ENCODE measurements at regions of chr13 and their contacts with region 1.

Region 1: DNA sequence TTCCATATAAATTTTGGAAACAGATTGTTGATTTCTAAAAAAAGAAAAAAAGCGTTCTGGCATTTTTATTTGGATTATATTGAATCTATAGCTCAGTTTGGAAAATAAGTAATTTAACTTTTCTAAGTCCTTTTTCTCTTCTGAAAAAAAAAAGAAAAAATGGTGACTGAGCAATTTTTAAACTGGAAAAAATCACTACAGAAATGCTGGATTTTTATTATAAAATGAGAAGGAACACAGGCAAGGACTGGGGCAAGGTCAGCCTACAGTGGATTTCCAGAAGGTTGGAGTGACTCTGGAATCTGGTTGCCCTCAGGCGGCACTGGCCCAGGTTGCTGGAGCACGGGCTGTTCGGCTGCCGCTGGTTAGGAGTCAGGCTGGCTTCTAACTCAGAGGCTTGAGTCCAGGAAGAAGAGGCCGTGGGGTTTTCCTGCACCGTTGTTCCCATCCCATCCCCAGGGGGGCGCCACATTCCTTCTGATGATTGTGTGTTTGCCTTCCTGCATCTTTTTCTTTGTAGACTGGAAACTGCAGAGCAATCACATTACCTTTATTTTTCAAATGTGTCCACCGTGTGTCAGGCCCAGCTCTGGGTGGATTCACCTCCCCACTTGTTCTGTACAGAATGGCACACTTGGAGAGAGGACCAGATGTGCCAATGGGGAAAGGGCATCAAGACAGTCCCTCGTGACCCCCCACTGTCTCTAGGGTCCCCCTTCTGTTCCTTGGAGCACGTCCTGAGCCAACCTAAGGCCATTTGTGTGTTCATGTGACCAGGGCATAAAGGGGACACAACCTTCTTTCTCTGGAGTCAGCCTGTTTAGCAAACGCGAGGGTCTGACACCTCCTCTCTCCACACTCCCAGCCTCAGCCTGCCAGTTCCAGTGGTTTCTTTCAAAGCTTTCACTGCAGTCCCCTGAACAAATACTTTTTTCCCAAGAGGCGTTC is 44.5 kb upstream of the GTF3A start:
- DNase-seq: peak; percentile 85 to 90
- H3K4me3 ChIP-seq: no peak overlapping the region
- H3K4me3 Mint-ChIP-seq: no peak overlapping the region
- H3K27ac Mint-ChIP-seq: no peak overlapping the region
- H3K4me1 ChIP-seq: peaks cover 4% of the 10 kb centered on the region; the same call in 1 of the 2 replicates
- H3K4me1 Mint-ChIP-seq: peaks cover 11% of the 10 kb centered on the region
- H3K27me3 ChIP-seq: no peaks in the 10 kb centered on the region
- H3K27me3 Mint-ChIP-seq: no peaks in the 10 kb centered on the region
- CTCF ChIP-seq: peak; percentile 88 to 90

Region 2: GRCh38 chr13:27406178-27406939 is 26.4 kb after region 1 on chr13:
- CTCF ChIA-PET with region 1: no interaction called
- POLR2A ChIA-PET with region 1: no interaction called
- intact Hi-C with region 1: loop called (anchors 1 kb)
- DNase-seq: peak in 1 of 2 experiments; percentile 57
- H3K4me3 ChIP-seq: no peak overlapping the region
- H3K4me3 Mint-ChIP-seq: no peak overlapping the region
- H3K27ac Mint-ChIP-seq: no peak overlapping the region
- H3K4me1 ChIP-seq: peaks cover 43% of the 10 kb centered on the region
- H3K4me1 Mint-ChIP-seq: peaks cover 32% of the 10 kb centered on the region
- H3K27me3 ChIP-seq: no peaks in the 10 kb centered on the region
- H3K27me3 Mint-ChIP-seq: no peaks in the 10 kb centered on the region
- CTCF ChIP-seq: peak; percentile 62 to 65

Region 3: DNA sequence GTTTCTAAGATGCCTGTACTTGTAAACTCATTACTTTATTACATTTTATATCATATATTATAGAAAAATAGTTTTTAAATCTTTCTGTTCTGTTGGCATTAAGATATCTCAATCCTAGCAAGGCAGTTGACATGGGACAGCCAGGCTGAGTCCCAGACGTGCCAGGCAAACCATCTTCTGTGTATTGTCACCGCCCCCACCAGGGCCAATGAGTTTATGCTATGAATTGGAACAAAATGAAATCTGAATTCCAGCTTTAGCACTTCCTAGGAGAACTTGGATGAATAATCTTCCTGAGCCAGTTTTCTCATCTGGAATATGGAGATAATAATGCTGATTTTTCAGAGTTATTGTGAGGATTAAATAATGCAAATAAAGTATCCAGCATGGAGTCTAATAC is 332.5 kb after region 1 on chr13:
- CTCF ChIA-PET with region 1: no interaction called
- POLR2A ChIA-PET with region 1: no interaction called
- intact Hi-C with region 1: loop called (anchors 1 kb)
- DNase-seq: peak in 1 of 2 experiments; percentile 30
- H3K4me3 ChIP-seq: no peak overlapping the region
- H3K4me3 Mint-ChIP-seq: no peak overlapping the region
- H3K27ac Mint-ChIP-seq: no peak overlapping the region
- H3K4me1 ChIP-seq: no peaks in the 10 kb centered on the region
- H3K4me1 Mint-ChIP-seq: no peaks in the 10 kb centered on the region
- H3K27me3 ChIP-seq: no peaks in the 10 kb centered on the region
- H3K27me3 Mint-ChIP-seq: peaks cover 2% of the 10 kb centered on the region
- CTCF ChIP-seq: peak; percentile 42 to 47